ENCODE measurements at regions of chr1 and their contacts with region 1.

Region 1: GRCh38 chr1:25743826-25744581 is 56.0 kb upstream of the SELENON start:
- DNase-seq: peak; percentile 86
- H3K4me3 ChIP-seq: no peak overlapping the region
- H3K27ac ChIP-seq: peak overlapping the region; percentile 62 to 76
- H3K4me1 ChIP-seq: peaks cover 23% of the 10 kb centered on the region
- H3K27me3 ChIP-seq: no peaks in the 10 kb centered on the region
- CTCF ChIP-seq: peak in 2 of 3 experiments; percentile 19 to 32
- POLR2A ChIP-seq: no peak

Region 2: DNA sequence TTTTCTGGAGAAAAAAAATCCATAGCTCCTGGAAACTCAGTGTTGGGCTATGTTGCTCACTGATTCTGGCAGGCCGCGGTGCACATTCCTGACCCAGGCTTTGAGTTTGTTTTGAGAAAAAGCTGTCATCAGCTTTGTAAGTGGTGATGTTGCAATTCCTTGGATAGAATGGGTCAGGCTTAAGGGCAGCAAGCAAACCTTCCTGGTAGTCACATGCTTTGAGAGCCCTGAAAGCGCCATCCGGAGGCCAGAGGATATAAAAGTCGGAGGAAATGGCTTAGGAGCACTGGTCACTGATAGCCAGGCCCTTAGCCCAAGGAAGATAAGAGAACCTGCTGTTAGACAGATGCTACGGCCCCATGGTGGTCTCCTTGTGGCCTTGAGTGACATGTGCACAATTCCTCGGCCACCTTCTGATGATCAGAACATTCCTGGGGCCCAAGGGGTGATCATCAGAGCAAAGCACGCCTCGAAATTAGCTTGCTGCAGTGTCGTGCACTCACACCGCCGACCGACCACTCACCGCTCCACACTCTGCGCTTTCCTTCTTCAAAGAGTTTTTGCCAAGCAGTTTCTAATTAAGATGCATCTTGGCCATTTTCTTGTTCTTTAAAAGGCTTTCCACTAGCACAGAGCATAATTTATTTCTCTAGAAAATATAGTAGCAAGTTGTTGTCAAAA is 48.8 kb before region 1 on chr1:
- intact Hi-C with region 1: loop called (anchors 5 kb)
- DNase-seq: peak; percentile 78
- H3K4me3 ChIP-seq: no peak overlapping the region
- H3K27ac ChIP-seq: peak overlapping the region in 1 of 2 donors; percentile 2
- H3K4me1 ChIP-seq: peaks cover 35% of the 10 kb centered on the region
- H3K27me3 ChIP-seq: no peaks in the 10 kb centered on the region
- CTCF ChIP-seq: no peak
- POLR2A ChIP-seq: no peak

Measured in testis (tissue), 5 donors.